ENCODE measurements at regions of chr3 and their contacts with region 1.

Region 1: DNA sequence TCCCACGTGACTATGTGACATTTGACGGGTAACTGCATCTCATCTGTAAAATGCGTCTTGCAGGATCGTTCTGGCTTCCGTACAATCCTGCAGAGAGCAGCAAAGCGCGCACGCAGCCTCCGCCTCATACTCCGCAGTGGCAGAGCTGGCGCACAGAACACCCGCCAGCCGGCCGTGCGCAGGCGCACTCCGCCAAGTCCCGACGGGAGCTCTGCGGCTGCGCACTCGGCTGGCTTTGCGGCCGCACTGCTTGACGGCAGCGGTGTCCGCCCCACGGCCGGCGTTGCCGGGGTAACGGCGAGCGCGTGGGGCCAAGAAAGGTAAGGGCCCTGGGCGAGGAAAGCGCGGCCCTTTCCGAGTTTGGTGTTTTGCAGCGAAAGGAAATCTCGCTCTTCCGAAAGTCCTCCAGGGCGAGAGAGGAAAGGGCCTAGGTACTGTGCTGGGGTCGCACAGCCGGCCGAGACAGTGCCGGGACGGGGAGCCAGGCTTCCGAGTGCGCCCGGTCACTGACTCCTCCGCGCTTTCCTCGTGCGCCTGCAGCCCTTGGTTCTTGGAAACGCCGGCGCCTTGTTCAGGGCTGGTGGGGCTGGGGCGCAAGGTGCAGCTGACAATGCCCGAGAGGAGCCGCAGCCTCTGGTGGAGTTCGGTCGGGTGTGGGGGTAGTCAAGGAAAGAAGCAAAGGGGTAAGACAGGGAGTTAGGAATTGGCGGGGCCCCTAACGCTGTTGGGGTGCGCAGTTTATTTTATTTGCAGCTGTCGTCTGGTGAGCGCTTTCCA is at the start of gene TSEN2:
- DNase-seq: peak; percentile 96 to 100 (median 98)
- H3K4me3 ChIP-seq: peak within 1 kb of the TSS; percentile 78 to 83
- H3K4me3 Mint-ChIP-seq: peak within 1 kb of the TSS; percentile 90 to 98 (median 96)
- H3K27ac ChIP-seq: peak within 1 kb of the TSS; percentile 81
- H3K27ac Mint-ChIP-seq: peak within 1 kb of the TSS; percentile 96 to 99 (median 97)
- H3K4me1 ChIP-seq: peaks cover 28% of the 10 kb centered on the region
- H3K4me1 Mint-ChIP-seq: peaks cover 19 to 43% (median 34%) of the 10 kb centered on the region in 4 donors
- H3K27me3 ChIP-seq: no peaks in the 10 kb centered on the region
- H3K27me3 Mint-ChIP-seq: no peaks in the 10 kb centered on the region
- total RNA-seq, gene TSEN2: 18.5 to 19.6 TPM

Region 2: DNA sequence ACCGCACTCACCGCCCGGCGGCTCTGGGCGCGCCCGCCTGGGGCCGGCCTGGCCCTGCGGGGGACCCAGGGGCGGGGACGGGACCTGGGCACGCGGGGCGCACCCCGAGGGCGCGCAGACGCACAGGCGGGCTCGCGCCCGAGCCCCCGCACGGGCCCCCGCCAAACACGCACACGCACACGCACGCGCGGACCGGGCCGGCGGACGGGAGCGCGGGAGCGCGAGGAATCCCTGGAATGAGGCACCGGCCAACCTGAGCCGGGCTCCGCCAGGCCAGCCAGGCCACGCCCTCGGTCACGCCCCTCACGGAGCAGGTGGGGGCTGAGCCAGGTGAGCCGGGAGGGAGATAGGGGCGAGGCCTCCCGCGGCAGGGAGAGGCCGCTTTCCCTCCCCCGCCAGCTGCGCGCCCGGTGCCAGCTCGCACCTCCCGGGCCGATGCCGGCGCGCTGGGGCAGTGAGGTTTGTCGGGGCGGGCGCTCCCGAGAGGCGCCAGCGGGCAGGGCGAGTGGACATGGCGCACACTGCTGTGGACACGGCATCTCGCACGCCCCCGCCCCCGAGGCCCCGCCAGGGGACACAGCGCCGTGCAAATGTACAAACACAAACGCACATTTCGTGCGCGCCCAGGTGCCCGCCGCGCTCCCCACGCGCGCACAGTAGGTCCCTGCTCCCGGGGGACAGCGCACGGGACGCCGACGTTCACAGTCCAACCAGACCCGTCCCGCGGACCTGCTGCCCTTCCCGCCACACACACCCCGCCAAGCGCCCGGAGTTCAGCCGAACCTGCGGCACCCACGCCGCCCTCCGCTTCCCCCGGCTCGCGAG is 764.8 kb before region 1 on chr3:
- CTCF ChIA-PET with region 1: no interaction called
- POLR2A ChIA-PET with region 1: no interaction called
- intact Hi-C with region 1: loop called (anchors 5 kb)
- DNase-seq: peak; percentile 76 to 87 (median 78)
- H3K4me3 ChIP-seq: peak overlapping the region in 1 of 2 donors; percentile 59
- H3K4me3 Mint-ChIP-seq: peak overlapping the region; percentile 64 to 97 (median 84)
- H3K27ac ChIP-seq: peak overlapping the region; percentile 64
- H3K27ac Mint-ChIP-seq: peak overlapping the region in 2 of 7 donors; percentile 59 to 70
- H3K4me1 ChIP-seq: peaks cover 14% of the 10 kb centered on the region
- H3K4me1 Mint-ChIP-seq: peaks cover 10 to 32% (median 23%) of the 10 kb centered on the region in 4 donors
- H3K27me3 ChIP-seq: no peaks in the 10 kb centered on the region
- H3K27me3 Mint-ChIP-seq: peaks cover 0 to 4% of the 10 kb centered on the region in 2 donors

Region 3: GRCh38 chr3:12135029-12135657 is 349.2 kb before region 1 on chr3:
- CTCF ChIA-PET with region 1: interaction called, 70 read pairs
- POLR2A ChIA-PET with region 1: interaction called, 3 read pairs
- intact Hi-C with region 1: no loop called
- DNase-seq: peak; percentile 40 to 51 (median 44)
- H3K4me3 ChIP-seq: no peak overlapping the region
- H3K4me3 Mint-ChIP-seq: no peak overlapping the region
- H3K27ac ChIP-seq: no peak overlapping the region
- H3K27ac Mint-ChIP-seq: no peak overlapping the region
- H3K4me1 ChIP-seq: no peaks in the 10 kb centered on the region
- H3K4me1 Mint-ChIP-seq: peaks cover 0 to 2% (median 0%) of the 10 kb centered on the region in 4 donors
- H3K27me3 ChIP-seq: no peaks in the 10 kb centered on the region
- H3K27me3 Mint-ChIP-seq: peaks cover 10 to 20% of the 10 kb centered on the region in 2 donors

Region 4: GRCh38 chr3:12371633-12372081 is 112.7 kb before region 1 on chr3:
- CTCF ChIA-PET with region 1: no interaction called
- POLR2A ChIA-PET with region 1: no interaction called
- intact Hi-C with region 1: no loop called
- DNase-seq: no peak
- H3K4me3 ChIP-seq: no peak overlapping the region
- H3K4me3 Mint-ChIP-seq: no peak overlapping the region
- H3K27ac ChIP-seq: no peak overlapping the region
- H3K27ac Mint-ChIP-seq: no peak overlapping the region
- H3K4me1 ChIP-seq: no peaks in the 10 kb centered on the region
- H3K4me1 Mint-ChIP-seq: no peaks in the 10 kb centered on the region
- H3K27me3 ChIP-seq: no peaks in the 10 kb centered on the region
- H3K27me3 Mint-ChIP-seq: peaks cover 7 to 13% of the 10 kb centered on the region in 2 donors

Region 5: GRCh38 chr3:12522721-12523120 is 38.3 kb after region 1 on chr3:
- CTCF ChIA-PET with region 1: no interaction called
- POLR2A ChIA-PET with region 1: no interaction called
- intact Hi-C with region 1: no loop called
- DNase-seq: no peak
- H3K4me3 ChIP-seq: no peak overlapping the region
- H3K4me3 Mint-ChIP-seq: no peak overlapping the region
- H3K27ac ChIP-seq: no peak overlapping the region
- H3K27ac Mint-ChIP-seq: no peak overlapping the region
- H3K4me1 ChIP-seq: no peaks in the 10 kb centered on the region
- H3K4me1 Mint-ChIP-seq: no peaks in the 10 kb centered on the region
- H3K27me3 ChIP-seq: no peaks in the 10 kb centered on the region
- H3K27me3 Mint-ChIP-seq: no peaks in the 10 kb centered on the region

Region 6: GRCh38 chr3:12556671-12557472 is 72.5 kb after region 1 on chr3 and contains the start of gene MKRN2:
- CTCF ChIA-PET with region 1: interaction called, 4 read pairs
- POLR2A ChIA-PET with region 1: interaction called, 9 read pairs
- intact Hi-C with region 1: loop called (anchors 1 kb)
- DNase-seq: peak; percentile 81 to 87 (median 82)
- H3K4me3 ChIP-seq: peak within 1 kb of the TSS; percentile 75 to 92
- H3K4me3 Mint-ChIP-seq: peak within 1 kb of the TSS; percentile 89 to 99 (median 94)
- H3K27ac ChIP-seq: peak within 1 kb of the TSS; percentile 93
- H3K27ac Mint-ChIP-seq: peak within 1 kb of the TSS; percentile 88 to 98 (median 95)
- H3K4me1 ChIP-seq: peaks cover 52% of the 10 kb centered on the region
- H3K4me1 Mint-ChIP-seq: peaks cover 43 to 68% (median 55%) of the 10 kb centered on the region in 4 donors
- H3K27me3 ChIP-seq: peaks cover 14% of the 10 kb centered on the region
- H3K27me3 Mint-ChIP-seq: peaks cover 21 to 23% of the 10 kb centered on the region in 2 donors
- total RNA-seq, gene MKRN2: 31.7 to 32.0 TPM